PC-3 (cell line): ENCODE measurements at regions of chr1 and their contacts with region 1.

Region 1: DNA sequence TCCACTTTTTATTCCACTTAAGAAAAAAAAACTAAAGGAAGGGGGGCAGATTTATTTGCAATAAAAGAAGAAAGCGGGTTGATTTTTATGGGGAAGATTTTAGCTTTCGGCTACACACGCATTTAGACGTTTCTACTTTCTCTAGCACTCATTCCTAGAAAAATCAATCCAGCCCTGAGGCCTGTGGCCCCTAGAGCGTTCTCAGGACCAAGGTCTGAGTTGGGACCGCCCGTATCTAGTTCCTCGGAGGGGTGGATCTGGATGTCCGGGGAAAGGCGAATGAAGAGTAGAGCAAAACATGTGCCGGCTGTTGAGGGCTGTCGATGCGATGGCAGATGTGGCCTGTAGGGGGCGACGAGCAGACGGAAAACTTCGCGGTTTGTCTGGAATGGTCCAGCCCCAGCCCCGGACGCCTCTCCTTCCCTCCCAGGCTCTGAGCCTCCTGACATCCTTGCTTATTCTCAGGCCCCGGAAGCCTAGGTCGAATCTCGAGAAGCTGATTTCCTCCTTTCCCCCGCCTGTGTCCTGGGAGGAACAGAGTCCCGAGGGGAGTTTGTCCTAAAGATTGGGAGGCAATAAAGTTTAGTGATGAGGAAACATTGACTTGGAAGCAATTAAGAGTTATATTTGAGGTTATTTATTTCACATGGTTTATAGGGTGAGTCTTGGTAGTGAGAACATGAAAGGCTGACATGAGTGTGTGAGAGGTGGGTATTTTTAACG is 5.2 kb downstream of the FOXD3 start:
- DNase-seq: peak; percentile 79
- ATAC-seq: peak; percentile 93
- H3K4me3 ChIP-seq: peak overlapping the region; percentile 54; the same call in 1 of the 2 replicates
- H3K27ac ChIP-seq: no peak overlapping the region
- H3K4me1 ChIP-seq: no peaks in the 10 kb centered on the region
- H3K27me3 ChIP-seq: 0 out of 2 replicates have a peak, but pooled peaks cover 3% of the 10 kb centered on the region
- CTCF ChIP-seq: peak; percentile 87

Region 2: GRCh38 chr1:63148825-63149645 is 178.5 kb before region 1 on chr1:
- CTCF ChIA-PET with region 1: no interaction called
- POLR2A ChIA-PET with region 1: no interaction called
- intact Hi-C with region 1: no loop called
- DNase-seq: peak; percentile 61
- ATAC-seq: peak; percentile 82
- H3K4me3 ChIP-seq: no peak overlapping the region
- H3K27ac ChIP-seq: no peak overlapping the region
- H3K4me1 ChIP-seq: no peaks in the 10 kb centered on the region
- H3K27me3 ChIP-seq: peaks cover 46% of the 10 kb centered on the region
- CTCF ChIP-seq: peak; percentile 77

Region 3: DNA sequence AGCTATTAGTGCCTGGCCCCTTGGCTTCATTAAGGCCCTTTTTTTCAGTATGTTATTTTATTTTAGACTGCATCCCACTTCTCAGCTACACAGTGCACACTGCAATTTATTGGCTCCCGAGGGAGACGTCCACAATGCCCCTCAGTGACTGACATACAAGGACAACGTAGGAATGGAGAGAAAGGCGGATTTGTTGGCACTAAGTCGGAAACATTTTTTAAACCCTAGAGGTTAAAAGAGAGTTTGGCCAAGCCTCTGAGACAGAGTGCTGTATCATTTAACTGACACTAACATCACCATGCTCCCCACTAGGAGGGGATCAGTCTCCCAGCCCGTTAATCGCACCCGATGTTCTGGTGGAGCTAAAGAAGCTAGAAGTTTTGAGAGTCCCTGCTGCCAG is 51.0 kb before region 1 on chr1:
- CTCF ChIA-PET with region 1: no interaction called
- POLR2A ChIA-PET with region 1: no interaction called
- intact Hi-C with region 1: no loop called
- DNase-seq: no peak
- ATAC-seq: no peak
- H3K4me3 ChIP-seq: no peak overlapping the region
- H3K27ac ChIP-seq: no peak overlapping the region
- H3K4me1 ChIP-seq: no peaks in the 10 kb centered on the region
- H3K27me3 ChIP-seq: peaks cover 26% of the 10 kb centered on the region
- CTCF ChIP-seq: no peak

Region 4: GRCh38 chr1:63367215-63368103 is 39.9 kb after region 1 on chr1 and contains the start of gene ALG6:
- CTCF ChIA-PET with region 1: no interaction called
- POLR2A ChIA-PET with region 1: no interaction called
- intact Hi-C with region 1: loop called (anchors 2 kb)
- DNase-seq: peak; percentile 97
- ATAC-seq: peak; percentile 93
- H3K4me3 ChIP-seq: peak within 1 kb of the TSS; percentile 95
- H3K27ac ChIP-seq: 0 out of 2 replicates have a peak within 1 kb of the TSS, but pooled peaks have one; percentile 15
- H3K4me1 ChIP-seq: peaks cover 8% of the 10 kb centered on the region
- H3K27me3 ChIP-seq: no peaks in the 10 kb centered on the region
- CTCF ChIP-seq: no peak
- total RNA-seq, gene ALG6: 16.0 and 17.3 TPM in 2 replicates

Region 5: DNA sequence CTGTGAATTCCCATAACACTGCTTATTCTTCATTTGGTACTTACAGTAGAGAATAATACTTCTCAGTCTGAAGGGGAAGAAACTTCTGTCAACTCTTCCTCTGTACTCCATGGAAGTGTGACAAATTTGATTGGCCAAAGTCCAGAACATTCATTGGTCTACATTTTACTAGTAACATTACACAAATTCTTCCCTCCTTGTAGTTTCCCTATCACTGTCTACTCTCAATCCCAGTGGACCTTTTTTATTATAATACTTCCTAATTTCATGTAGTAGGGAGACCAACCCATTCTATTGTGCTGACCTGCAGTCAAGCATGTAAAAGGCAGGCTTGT is 114.5 kb after region 1 on chr1:
- CTCF ChIA-PET with region 1: no interaction called
- POLR2A ChIA-PET with region 1: no interaction called
- intact Hi-C with region 1: loop called (anchors 1 kb)
- DNase-seq: peak; percentile 28
- ATAC-seq: peak; percentile 39
- H3K4me3 ChIP-seq: no peak overlapping the region
- H3K27ac ChIP-seq: no peak overlapping the region
- H3K4me1 ChIP-seq: no peaks in the 10 kb centered on the region
- H3K27me3 ChIP-seq: no peaks in the 10 kb centered on the region
- CTCF ChIP-seq: no peak

Region 6: DNA sequence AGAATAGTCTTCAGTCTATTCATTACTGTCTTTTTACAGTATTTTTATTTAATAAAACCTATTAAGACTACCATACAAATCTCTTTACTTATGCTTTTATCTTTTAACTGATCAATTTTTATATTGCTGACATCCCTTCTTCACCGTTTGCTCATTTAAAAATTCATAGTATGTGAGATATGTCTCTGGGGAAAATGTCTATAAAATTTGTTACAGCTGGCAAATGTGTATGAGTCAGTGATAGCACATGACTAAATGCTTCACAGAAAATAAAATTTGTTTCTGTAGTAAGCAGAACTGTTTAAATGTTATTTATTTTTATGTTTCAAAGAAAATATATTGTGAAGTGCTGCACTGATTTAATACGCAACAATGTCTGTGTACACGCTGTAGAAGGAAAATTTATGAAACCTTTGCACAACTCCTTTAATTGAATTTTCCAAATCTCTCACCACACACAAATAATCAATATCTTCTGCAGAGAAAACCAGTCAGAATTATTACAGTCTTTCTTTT is 121.2 kb after region 1 on chr1:
- CTCF ChIA-PET with region 1: no interaction called
- POLR2A ChIA-PET with region 1: no interaction called
- intact Hi-C with region 1: loop called (anchors 2 kb)
- DNase-seq: no peak
- ATAC-seq: peak; percentile 46
- H3K4me3 ChIP-seq: no peak overlapping the region
- H3K27ac ChIP-seq: no peak overlapping the region
- H3K4me1 ChIP-seq: no peaks in the 10 kb centered on the region
- H3K27me3 ChIP-seq: no peaks in the 10 kb centered on the region
- CTCF ChIP-seq: no peak

Region 7: DNA sequence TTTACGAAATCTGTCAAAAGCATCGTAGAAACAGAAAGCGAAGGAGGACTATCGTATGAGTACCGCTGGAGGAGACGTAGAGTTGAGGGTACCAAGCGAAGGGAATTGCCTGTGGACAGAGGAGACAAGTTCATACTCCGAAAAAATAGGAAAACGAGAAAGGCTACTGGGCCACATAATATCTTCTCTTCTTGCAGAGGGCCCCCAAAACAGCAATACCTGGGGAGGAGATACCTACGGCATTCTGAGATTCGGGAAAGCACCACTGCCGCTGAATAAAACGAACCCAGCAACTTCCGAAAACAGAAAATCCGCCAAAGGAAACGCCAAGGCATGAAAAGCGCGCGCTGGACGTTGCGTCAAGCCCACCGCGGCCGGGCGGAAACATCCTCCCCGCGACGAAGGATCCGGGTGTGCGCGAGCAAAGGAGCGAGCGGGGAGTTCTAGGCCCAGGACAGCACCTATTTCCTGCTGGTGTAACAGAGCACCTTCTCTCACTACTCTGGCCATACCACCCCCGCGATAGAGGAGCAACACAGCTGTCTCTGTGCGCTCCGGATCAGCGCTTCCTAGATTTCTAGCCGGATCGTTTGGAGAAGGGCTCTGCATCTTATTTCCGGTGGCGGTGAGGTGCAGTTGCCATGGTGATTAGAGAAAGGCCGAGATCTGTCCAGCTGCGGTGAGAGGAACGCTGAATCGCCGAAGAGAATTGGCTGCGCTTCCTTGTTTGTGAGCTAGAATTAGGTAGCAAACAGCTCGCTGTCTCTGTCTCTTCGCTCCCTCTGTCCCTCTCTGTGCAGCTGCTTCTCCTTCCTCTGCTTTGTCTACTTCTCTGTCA is 195.5 kb after region 1 on chr1 and contains the starts of genes EFCAB7 and ITGB3BP:
- CTCF ChIA-PET with region 1: no interaction called
- POLR2A ChIA-PET with region 1: interaction called, 10 read pairs
- intact Hi-C with region 1: no loop called
- DNase-seq: peak; percentile 95
- ATAC-seq: peak; percentile 95
- H3K4me3 ChIP-seq: peak within 1 kb of the TSS; percentile 90
- H3K27ac ChIP-seq: peak within 1 kb of the TSS; percentile 86
- H3K4me1 ChIP-seq: peaks cover 24% of the 10 kb centered on the region
- H3K27me3 ChIP-seq: no peaks in the 10 kb centered on the region
- CTCF ChIP-seq: no peak
- total RNA-seq, gene EFCAB7: 3.6 and 4.5 TPM in 2 replicates
- total RNA-seq, gene ITGB3BP: 31.3 and 44.8 TPM in 2 replicates

Region 8: GRCh38 chr1:63537940-63538339 is 210.4 kb after region 1 on chr1:
- CTCF ChIA-PET with region 1: interaction called, 3 read pairs
- POLR2A ChIA-PET with region 1: no interaction called
- intact Hi-C with region 1: loop called (anchors 2 kb)
- DNase-seq: peak; percentile 38
- ATAC-seq: no peak
- H3K4me3 ChIP-seq: no peak overlapping the region
- H3K27ac ChIP-seq: no peak overlapping the region
- H3K4me1 ChIP-seq: no peaks in the 10 kb centered on the region
- H3K27me3 ChIP-seq: no peaks in the 10 kb centered on the region
- CTCF ChIP-seq: peak; percentile 72